Activated T-helper 2 cell treated with anti-CD3 and anti-CD28 coated beads, Interferon-gamma antibody, Interleukin-2, Interleukin-4, amounts not matched to agents 10 μg/mL and 5 μg/mL and 100 μg/mL, durations not matched to agents 14 hours and 24 hours and 36 hours (primary cell): ENCODE measurements at regions of chr12 and their contacts with region 1.

Region 1: DNA sequence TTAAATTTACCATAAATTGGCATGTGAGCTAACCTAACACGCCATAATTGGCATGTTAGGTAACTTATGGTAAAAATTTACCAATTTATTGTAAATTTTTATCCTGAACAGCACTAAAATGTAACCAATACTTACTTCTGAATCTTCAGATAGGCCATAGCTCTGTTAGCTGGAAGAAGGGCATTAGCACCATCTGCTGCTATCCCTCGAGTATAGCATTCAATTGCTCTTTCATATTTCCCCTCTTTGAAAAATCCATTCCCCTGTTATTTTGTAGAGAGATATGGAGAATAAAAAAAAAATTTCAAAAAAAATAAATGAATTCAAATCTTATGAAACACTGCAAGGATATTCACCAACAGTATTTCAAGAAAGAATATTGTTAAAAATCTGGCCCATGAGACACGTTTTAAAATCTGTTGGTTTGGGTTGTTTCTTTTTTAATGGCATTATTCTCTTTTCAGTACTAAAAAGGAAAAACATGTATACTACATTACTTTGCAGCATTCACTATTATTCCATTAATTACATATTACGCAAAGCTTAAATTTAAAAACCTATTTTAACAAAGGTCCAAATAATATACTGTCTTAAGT is 19.1 kb downstream of the RPAP3 start:
- DNase-seq: no peak
- H3K4me3 Mint-ChIP-seq: no peak overlapping the region
- H3K27ac Mint-ChIP-seq: no peak overlapping the region
- H3K4me1 Mint-ChIP-seq: no peaks in the 10 kb centered on the region
- H3K27me3 Mint-ChIP-seq: no peaks in the 10 kb centered on the region

Region 2: DNA sequence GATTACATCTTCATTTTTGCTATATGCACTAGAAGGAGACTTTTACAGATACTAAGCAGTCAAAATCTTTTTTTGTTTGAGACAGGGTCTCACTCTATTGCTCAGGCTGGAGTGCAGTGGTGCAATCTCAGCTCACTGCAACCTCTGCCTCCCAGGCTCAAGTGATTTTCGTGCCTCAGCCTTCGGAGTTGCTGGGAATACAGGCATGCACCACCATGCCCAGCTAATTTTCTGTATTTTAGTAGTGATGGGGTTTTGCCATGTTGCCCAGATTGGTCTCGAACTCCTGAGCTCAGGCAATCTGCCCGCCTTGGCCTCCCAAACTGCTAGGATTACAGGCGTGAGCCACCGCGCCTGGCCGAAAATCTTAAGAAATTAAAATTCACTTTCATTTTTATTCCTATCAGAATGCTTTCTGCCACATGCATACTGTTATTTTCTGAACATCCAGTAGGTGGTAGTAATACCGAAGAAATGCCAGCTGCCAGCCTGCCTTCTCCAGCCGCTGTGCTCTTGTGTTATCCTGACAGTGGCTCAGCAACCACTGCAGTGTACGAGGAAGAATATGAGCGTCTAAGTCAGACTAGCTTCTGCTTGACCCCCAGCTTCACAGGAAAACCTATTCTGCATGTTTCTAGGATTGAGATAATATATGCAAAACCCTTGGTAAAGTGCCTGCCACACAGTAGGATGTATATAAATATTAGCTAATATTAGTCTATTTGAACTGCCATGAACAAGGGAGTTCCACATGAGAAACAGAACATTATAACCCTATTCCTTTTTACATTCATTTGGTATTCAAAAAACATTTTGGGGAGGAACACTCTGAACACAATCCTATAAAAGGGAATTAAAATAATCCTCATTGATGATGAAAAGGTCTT is 35.1 kb before region 1 on chr12:
- intact Hi-C with region 1: loop called (anchors 2 kb)
- DNase-seq: peak; percentile 30
- H3K4me3 Mint-ChIP-seq: no peak overlapping the region
- H3K27ac Mint-ChIP-seq: no peak overlapping the region
- H3K4me1 Mint-ChIP-seq: peaks cover 20% of the 10 kb centered on the region
- H3K27me3 Mint-ChIP-seq: no peaks in the 10 kb centered on the region

Region 3: GRCh38 chr12:47753034-47754001 is 66.6 kb after region 1 on chr12:
- intact Hi-C with region 1: no loop called
- DNase-seq: no peak
- H3K4me3 Mint-ChIP-seq: no peak overlapping the region
- H3K27ac Mint-ChIP-seq: no peak overlapping the region
- H3K4me1 Mint-ChIP-seq: peaks cover 31% of the 10 kb centered on the region
- H3K27me3 Mint-ChIP-seq: no peaks in the 10 kb centered on the region